ENCODE measurements at regions of chr4 and their contacts with region 1.

Region 1: GRCh38 chr4:145618932-145619638 is at the start of gene MMAA:
- DNase-seq: peak; percentile 98
- ATAC-seq: peak; percentile 95
- H3K4me3 Mint-ChIP-seq: peak within 1 kb of the TSS; percentile 94
- H3K27ac Mint-ChIP-seq: peak within 1 kb of the TSS; percentile 92
- H3K4me1 Mint-ChIP-seq: peaks cover 24% of the 10 kb centered on the region
- H3K27me3 Mint-ChIP-seq: peaks cover under 1% of the 10 kb centered on the region
- CTCF ChIP-seq: no peak
- total RNA-seq, gene MMAA: 11.3 and 13.5 TPM in 2 replicates

Region 2: GRCh38 chr4:144499777-144500176 is 1119.3 kb before region 1 on chr4:
- CTCF ChIA-PET with region 1: no interaction called
- POLR2A ChIA-PET with region 1: no interaction called
- intact Hi-C with region 1: no loop called
- DNase-seq: no peak
- ATAC-seq: no peak
- H3K4me3 Mint-ChIP-seq: no peak overlapping the region
- H3K27ac Mint-ChIP-seq: no peak overlapping the region
- H3K4me1 Mint-ChIP-seq: peaks cover 4% of the 10 kb centered on the region
- H3K27me3 Mint-ChIP-seq: no peaks in the 10 kb centered on the region
- CTCF ChIP-seq: no peak

Region 3: GRCh38 chr4:145154573-145154972 is 464.5 kb before region 1 on chr4:
- CTCF ChIA-PET with region 1: interaction called, 5 read pairs
- POLR2A ChIA-PET with region 1: no interaction called
- intact Hi-C with region 1: loop called (anchors 1 kb)
- DNase-seq: no peak
- ATAC-seq: peak; percentile 37
- H3K4me3 Mint-ChIP-seq: no peak overlapping the region
- H3K27ac Mint-ChIP-seq: no peak overlapping the region
- H3K4me1 Mint-ChIP-seq: peaks cover 8% of the 10 kb centered on the region
- H3K27me3 Mint-ChIP-seq: no peaks in the 10 kb centered on the region
- CTCF ChIP-seq: no peak

Region 4: GRCh38 chr4:145234091-145234706 is 384.9 kb before region 1 on chr4:
- CTCF ChIA-PET with region 1: interaction called, 30 read pairs
- POLR2A ChIA-PET with region 1: interaction called, 4 read pairs
- intact Hi-C with region 1: loop called (anchors 1 kb)
- DNase-seq: no peak
- ATAC-seq: peak; percentile 67
- H3K4me3 Mint-ChIP-seq: no peak overlapping the region
- H3K27ac Mint-ChIP-seq: no peak overlapping the region
- H3K4me1 Mint-ChIP-seq: no peaks in the 10 kb centered on the region
- H3K27me3 Mint-ChIP-seq: no peaks in the 10 kb centered on the region
- CTCF ChIP-seq: no peak

Region 5: GRCh38 chr4:145936142-145936996 is 317.3 kb after region 1 on chr4:
- CTCF ChIA-PET with region 1: no interaction called
- POLR2A ChIA-PET with region 1: interaction called, 4 read pairs
- intact Hi-C with region 1: loop called (anchors 1 kb)
- DNase-seq: peak; percentile 57
- ATAC-seq: peak; percentile 49
- H3K4me3 Mint-ChIP-seq: peak overlapping the region; percentile 96
- H3K27ac Mint-ChIP-seq: peak overlapping the region; percentile 92
- H3K4me1 Mint-ChIP-seq: peaks cover 49% of the 10 kb centered on the region
- H3K27me3 Mint-ChIP-seq: no peaks in the 10 kb centered on the region
- CTCF ChIP-seq: no peak

Region 6: DNA sequence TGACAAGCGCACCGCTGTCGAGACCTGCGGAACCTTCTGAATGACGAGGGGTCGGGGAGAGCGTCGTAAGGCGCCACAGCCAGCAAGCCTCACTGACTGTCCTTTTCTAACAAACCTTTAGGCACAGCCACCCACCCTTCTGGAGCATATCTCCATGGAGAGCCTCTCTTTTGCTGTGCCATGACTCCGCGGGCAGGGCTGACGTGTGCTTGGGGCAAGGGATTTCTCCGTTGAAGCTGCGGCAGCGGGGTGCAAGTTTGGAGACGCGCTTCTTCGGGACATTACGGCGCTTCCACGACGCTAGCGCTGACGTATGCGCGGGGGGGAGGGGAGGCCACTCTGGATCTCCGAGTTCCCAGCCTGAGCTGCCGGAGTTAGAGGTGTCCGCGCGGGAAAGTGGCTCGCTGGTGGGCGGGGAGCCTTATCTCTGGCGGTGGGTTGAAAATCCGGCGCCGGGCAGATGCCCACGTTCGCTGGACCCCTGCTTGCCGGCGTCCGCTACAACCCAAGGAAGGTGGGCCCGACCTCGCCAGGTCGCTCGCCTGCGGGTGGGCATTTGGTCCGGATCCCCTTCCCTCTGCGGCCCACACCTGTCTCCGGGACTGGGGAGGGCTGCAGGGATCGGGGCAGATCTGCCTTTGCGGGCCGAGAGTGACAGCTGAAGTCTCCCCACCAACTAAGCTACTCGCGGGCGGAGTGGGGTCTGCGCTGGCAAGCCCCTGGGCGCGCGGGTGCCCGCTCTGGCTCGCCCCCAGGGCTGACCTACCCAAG is 903.2 kb after region 1 on chr4:
- CTCF ChIA-PET with region 1: no interaction called
- POLR2A ChIA-PET with region 1: no interaction called
- intact Hi-C with region 1: loop called (anchors 2 kb)
- DNase-seq: peak; percentile 75
- ATAC-seq: peak; percentile 80
- H3K4me3 Mint-ChIP-seq: no peak overlapping the region
- H3K27ac Mint-ChIP-seq: no peak overlapping the region
- H3K4me1 Mint-ChIP-seq: peaks cover 21% of the 10 kb centered on the region
- H3K27me3 Mint-ChIP-seq: no peaks in the 10 kb centered on the region
- CTCF ChIP-seq: no peak

Region 7: GRCh38 chr4:147056940-147057610 is 1438.0 kb after region 1 on chr4:
- CTCF ChIA-PET with region 1: no interaction called
- POLR2A ChIA-PET with region 1: no interaction called
- intact Hi-C with region 1: loop called (anchors 5 kb)
- DNase-seq: no peak
- ATAC-seq: no peak
- H3K4me3 Mint-ChIP-seq: peak overlapping the region; percentile 83
- H3K27ac Mint-ChIP-seq: peak overlapping the region; percentile 85
- H3K4me1 Mint-ChIP-seq: peaks cover 25% of the 10 kb centered on the region
- H3K27me3 Mint-ChIP-seq: peaks cover 8% of the 10 kb centered on the region
- CTCF ChIP-seq: no peak

Measured in activated B cell treated with CpG ODN at 0.5 μM for 24 hours (primary cell).